ENCODE measurements at regions of chr15 and their contacts with region 1.

Region 1: DNA sequence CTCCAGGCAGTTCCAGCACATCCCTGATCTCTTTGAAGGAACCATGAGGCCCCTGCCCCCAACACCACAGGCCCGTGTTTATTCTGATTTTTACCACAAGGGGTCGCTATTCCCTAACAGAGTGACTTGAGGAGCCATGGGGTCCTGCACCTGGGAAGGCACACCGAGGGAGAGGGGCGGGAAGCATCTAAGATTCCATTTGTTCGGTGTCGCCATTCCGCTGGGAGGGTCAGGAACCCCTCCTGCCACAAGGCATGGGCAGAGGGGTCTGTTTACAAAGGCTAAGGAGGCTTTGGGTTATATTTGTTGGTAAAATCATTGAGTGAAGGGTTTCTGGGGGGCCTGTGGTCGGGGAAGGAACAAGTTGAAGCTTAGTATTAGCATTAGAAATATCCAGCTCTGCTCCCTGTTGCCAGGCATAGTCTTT is 77.1 kb downstream of the WDR76 start:
- DNase-seq: peak; percentile 84

Region 2: GRCh38 chr15:43433165-43433564 is 470.7 kb before region 1 on chr15:
- in situ Hi-C with region 1: no loop called
- DNase-seq: no peak

Region 3: GRCh38 chr15:43735416-43735815 is 168.5 kb before region 1 on chr15:
- in situ Hi-C with region 1: no loop called
- DNase-seq: no peak

Region 4: DNA sequence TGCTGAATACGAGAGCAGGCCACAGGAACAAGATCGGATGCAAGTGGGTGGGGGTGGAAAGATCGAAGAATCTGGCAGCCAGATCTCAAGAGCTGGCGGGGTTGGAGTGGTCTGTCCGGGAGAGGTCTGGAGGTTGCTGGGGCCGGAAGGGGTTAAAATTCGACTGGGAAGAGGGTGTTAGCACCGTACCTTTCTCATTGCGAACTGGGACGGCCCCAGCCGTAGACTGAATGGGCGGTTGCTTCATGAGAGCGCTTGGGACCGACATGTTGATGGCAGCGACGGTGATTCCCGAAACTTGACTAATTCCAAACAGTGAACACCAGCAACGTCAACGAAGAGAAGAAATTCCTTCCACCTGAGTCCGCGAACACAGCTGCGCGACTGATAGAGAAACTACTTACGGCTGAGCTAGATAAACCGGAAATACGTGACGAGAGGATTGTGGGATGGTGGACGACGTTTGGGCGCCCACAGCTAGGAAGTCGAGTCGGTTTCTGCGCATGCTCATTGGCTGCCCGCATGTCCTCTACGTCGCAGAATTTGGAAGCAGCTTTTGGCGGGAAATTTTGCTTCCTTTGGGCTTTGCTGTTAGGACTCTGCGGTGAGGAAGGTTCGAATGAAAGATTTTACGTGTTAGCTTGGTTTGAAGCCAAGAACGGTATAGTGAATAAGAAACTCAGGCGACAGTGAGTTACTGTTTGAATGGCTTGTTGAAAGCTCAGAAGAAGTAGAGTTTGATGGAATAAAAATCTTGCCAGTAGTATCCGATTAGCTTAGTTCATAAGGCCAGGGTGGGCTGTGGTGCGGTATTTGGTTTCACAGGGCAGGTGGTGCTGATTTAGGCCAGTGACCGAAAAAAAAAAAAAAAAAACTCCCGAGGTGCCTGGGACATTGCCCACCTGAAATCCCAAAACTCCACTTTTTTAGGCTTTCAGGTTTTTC is 79.3 kb before region 1 on chr15 and contains the start of gene MFAP1:
- in situ Hi-C with region 1: no loop called
- DNase-seq: peak; percentile 97
- total RNA-seq, gene MFAP1: 27.6 and 28.8 TPM in 2 replicates

Region 5: GRCh38 chr15:43939070-43939469 is 35.2 kb after region 1 on chr15:
- in situ Hi-C with region 1: no loop called
- DNase-seq: peak; percentile 60

Region 6: GRCh38 chr15:44058126-44058525 is 154.2 kb after region 1 on chr15:
- in situ Hi-C with region 1: loop called (anchors 10 kb)
- DNase-seq: no peak